ENCODE measurements at regions of chr1 and their contacts with region 1.

Region 1: GRCh38 chr1:83516369-83516768 is 482.6 kb downstream of the TTLL7 start:
- DNase-seq: no peak
- H3K4me3 Mint-ChIP-seq: no peak overlapping the region
- H3K27ac Mint-ChIP-seq: no peak overlapping the region
- H3K4me1 Mint-ChIP-seq: peaks cover 17% of the 10 kb centered on the region
- H3K27me3 Mint-ChIP-seq: no peaks in the 10 kb centered on the region

Region 2: GRCh38 chr1:83500987-83501591 is 15.3 kb before region 1 on chr1:
- intact Hi-C with region 1: loop called (anchors 2 kb)
- DNase-seq: no peak
- H3K4me3 Mint-ChIP-seq: peak overlapping the region; percentile 2
- H3K27ac Mint-ChIP-seq: peak overlapping the region; percentile 44
- H3K4me1 Mint-ChIP-seq: peaks cover 40% of the 10 kb centered on the region
- H3K27me3 Mint-ChIP-seq: no peaks in the 10 kb centered on the region

Region 3: DNA sequence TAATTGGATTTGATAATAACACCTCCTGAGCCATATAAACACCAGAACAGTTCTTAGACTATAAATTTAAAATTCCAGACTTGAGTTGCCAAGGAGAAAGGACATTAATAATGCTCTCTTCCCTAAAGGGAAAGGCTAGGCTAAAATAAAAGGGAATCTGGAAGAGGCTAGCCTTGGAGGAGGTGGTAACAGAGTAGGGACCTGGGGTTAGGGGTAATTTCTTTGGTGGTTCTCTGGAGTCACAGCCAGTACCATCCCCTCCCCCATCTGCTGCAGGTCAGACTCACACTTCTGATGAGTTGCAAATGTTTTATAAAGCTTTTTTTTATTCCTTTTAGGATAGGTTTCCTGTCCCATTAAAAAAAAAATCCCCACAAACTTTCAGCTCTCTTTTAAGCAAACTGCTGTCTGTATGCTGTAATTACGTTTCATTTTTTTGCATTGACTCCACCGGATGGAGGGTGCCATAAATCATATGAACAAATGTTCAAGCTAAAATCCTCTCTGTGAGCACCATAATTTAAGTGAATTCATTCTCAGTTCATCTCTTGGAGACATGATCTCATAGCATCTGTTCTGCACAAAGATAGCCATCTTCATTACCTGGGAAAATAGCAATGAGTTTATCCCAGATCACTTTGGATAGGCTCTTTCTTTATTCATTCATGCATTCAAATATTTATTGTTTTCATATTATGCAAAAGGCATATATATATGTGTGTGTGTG is 103.0 kb after region 1 on chr1:
- intact Hi-C with region 1: no loop called
- DNase-seq: no peak
- H3K4me3 Mint-ChIP-seq: no peak overlapping the region
- H3K27ac Mint-ChIP-seq: no peak overlapping the region
- H3K4me1 Mint-ChIP-seq: no peaks in the 10 kb centered on the region
- H3K27me3 Mint-ChIP-seq: no peaks in the 10 kb centered on the region

Measured in activated T-helper 2 cell treated with anti-CD3 and anti-CD28 coated beads, Interferon-gamma antibody, Interleukin-2, Interleukin-4, amounts not matched to agents 10 μg/mL and 5 μg/mL and 100 μg/mL, durations not matched to agents 14 hours and 24 hours and 36 hours (primary cell).